ENCODE measurements at regions of chr10 and their contacts with region 1.

Region 1: DNA sequence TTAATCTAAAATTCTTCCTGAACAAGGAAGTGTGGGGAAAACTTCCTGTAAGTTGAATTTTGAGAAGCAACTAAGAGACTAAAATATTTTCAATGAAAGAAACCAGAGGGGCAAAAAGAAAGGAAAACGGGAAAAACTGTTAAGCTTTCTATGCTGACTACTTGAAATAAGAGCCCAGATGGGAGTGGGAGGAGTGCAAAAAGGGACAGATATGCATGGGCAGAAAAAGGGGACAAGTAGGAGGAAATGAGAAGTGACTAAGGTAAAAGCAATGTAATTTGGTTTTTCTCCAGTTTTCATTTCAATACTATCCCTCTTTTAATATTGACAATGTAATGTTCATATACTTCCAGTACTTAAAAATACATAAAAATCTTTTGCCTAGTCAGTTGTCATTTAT is 11.1 kb downstream of the OGA start:
- DNase-seq: no peak
- H3K4me3 Mint-ChIP-seq: no peak overlapping the region
- H3K27ac Mint-ChIP-seq: no peak overlapping the region
- H3K4me1 Mint-ChIP-seq: peaks cover 7% of the 10 kb centered on the region
- H3K27me3 Mint-ChIP-seq: no peaks in the 10 kb centered on the region

Region 2: GRCh38 chr10:100934084-100934659 is 873.0 kb before region 1 on chr10:
- intact Hi-C with region 1: loop called (anchors 10 kb)
- DNase-seq: no peak
- H3K4me3 Mint-ChIP-seq: no peak overlapping the region
- H3K27ac Mint-ChIP-seq: no peak overlapping the region
- H3K4me1 Mint-ChIP-seq: no peaks in the 10 kb centered on the region
- H3K27me3 Mint-ChIP-seq: no peaks in the 10 kb centered on the region

Region 3: GRCh38 chr10:101660256-101660655 is 146.9 kb before region 1 on chr10:
- intact Hi-C with region 1: no loop called
- DNase-seq: no peak
- H3K4me3 Mint-ChIP-seq: no peak overlapping the region
- H3K27ac Mint-ChIP-seq: no peak overlapping the region
- H3K4me1 Mint-ChIP-seq: no peaks in the 10 kb centered on the region
- H3K27me3 Mint-ChIP-seq: no peaks in the 10 kb centered on the region

Region 4: GRCh38 chr10:102300278-102300843 is 493.2 kb after region 1 on chr10:
- intact Hi-C with region 1: no loop called
- DNase-seq: no peak
- H3K4me3 Mint-ChIP-seq: peak overlapping the region; percentile 13
- H3K27ac Mint-ChIP-seq: peak overlapping the region; percentile 86
- H3K4me1 Mint-ChIP-seq: peaks cover 18% of the 10 kb centered on the region
- H3K27me3 Mint-ChIP-seq: no peaks in the 10 kb centered on the region